Activated CD4-positive, alpha-beta T cell treated with anti-CD3 and anti-CD28 coated beads, Interleukin-2, amount 10 ng/mL, durations not matched to agents 24 days and 14 days (primary cell): ENCODE measurements at regions of chr7 and their contacts with region 1.

Region 1: GRCh38 chr7:130486114-130486958 is 5.5 kb upstream of the MEST start:
- DNase-seq: peak; percentile 83
- H3K4me3 Mint-ChIP-seq: peak overlapping the region; percentile 81
- H3K27ac Mint-ChIP-seq: peak overlapping the region; percentile 65
- H3K4me1 Mint-ChIP-seq: peaks cover 22% of the 10 kb centered on the region
- H3K27me3 Mint-ChIP-seq: peaks cover 67% of the 10 kb centered on the region

Region 2: DNA sequence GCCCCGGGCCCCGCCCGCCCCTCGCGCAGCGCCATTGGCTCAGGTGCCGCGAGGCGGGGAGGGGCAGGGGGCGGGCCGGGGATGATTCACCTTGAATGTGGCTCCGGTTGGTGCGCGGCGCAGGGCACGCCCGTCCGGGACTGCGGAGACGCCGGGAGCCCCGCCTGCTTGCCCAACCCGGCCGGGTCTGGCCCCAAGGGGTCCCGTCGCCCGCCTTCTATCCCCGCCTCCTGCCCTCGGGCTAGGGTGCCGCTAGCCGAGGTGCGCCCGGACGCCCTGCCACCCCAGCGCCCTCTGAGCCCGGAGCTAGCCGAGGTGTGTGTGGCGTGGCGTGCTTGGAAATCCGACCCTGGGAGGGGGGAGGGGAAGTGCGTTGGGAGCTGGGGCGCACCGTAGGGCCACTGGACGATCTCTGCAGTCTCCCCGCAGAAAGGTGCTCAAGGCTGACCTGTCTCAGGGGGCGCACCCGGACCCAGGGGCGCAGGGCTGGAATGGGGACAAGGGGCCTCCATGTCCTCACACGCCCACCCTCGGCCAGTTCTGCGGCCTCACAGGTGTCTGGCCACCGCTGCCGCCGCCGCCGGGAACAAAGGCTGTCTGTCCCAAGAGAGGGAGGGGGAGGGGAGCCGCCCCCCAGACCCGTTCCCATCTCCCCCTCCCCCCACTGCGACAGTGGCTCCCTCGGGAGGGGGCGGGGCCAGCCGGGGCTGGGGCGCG is 705.9 kb before region 1 on chr7:
- intact Hi-C with region 1: loop called (anchors 5 kb)
- DNase-seq: peak; percentile 87
- H3K4me3 Mint-ChIP-seq: peak overlapping the region; percentile 64
- H3K27ac Mint-ChIP-seq: no peak overlapping the region
- H3K4me1 Mint-ChIP-seq: peaks cover 28% of the 10 kb centered on the region
- H3K27me3 Mint-ChIP-seq: peaks cover 60% of the 10 kb centered on the region

Region 3: GRCh38 chr7:130242198-130243014 is 243.9 kb before region 1 on chr7:
- intact Hi-C with region 1: loop called (anchors 5 kb)
- DNase-seq: peak; percentile 84
- H3K4me3 Mint-ChIP-seq: no peak overlapping the region
- H3K27ac Mint-ChIP-seq: no peak overlapping the region
- H3K4me1 Mint-ChIP-seq: peaks cover 14% of the 10 kb centered on the region
- H3K27me3 Mint-ChIP-seq: peaks cover 4% of the 10 kb centered on the region

Region 4: GRCh38 chr7:130277763-130278643 is 208.3 kb before region 1 on chr7:
- intact Hi-C with region 1: loop called (anchors 10 kb)
- DNase-seq: no peak
- H3K4me3 Mint-ChIP-seq: peak overlapping the region; percentile 29
- H3K27ac Mint-ChIP-seq: peak overlapping the region; percentile 87
- H3K4me1 Mint-ChIP-seq: peaks cover 20% of the 10 kb centered on the region
- H3K27me3 Mint-ChIP-seq: no peaks in the 10 kb centered on the region

Region 5: DNA sequence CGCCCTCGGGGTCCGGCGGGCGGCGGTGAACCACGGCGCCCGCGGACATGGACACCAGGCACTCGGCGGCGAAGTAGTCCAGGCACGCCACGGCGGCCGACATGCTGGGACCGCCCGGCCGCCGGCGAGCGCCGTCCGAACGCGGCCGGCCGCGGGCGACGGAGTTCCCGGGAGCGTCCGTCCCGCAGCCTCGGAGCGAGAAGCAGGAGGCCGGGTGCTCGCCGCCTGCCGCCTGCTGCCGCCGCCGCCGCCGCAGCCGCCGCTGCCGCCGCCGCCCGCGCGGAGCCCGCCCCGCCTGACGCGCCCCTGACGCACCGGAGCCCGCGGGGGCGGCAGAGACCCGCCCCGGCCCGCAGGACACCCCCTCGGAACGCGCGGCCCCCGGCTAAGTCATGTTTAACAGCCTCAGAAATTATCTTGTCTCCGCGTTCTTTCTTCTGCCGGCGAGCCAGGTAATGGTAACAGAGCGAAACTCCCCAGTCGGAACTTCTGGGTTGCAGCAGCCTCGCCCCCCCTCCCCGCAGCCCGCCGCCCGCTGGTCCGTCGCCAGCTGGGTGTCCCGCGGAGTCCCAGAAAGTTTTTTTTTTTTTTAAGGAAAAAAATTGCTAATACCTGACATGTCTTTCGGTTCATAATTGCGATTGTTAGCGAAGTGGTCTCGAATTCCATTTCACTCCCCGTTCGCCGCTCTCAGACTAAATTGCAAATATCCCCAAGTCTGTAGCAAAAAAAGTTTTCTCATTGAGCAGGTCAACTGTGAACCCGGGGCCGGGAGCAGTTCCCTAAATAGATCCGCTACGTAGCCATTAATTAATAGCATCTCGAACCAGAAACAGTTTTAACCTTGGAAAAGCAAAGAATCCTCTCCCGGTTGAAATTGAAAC is 247.8 kb after region 1 on chr7 and contains the start of gene KLF14:
- intact Hi-C with region 1: loop called (anchors 5 kb)
- DNase-seq: peak; percentile 76
- H3K4me3 Mint-ChIP-seq: peak within 1 kb of the TSS; percentile 87
- H3K27ac Mint-ChIP-seq: peak within 1 kb of the TSS; percentile 11
- H3K4me1 Mint-ChIP-seq: peaks cover 3% of the 10 kb centered on the region
- H3K27me3 Mint-ChIP-seq: peaks cover 70% of the 10 kb centered on the region
- total RNA-seq, gene KLF14: not detected in 2 replicates

Region 6: GRCh38 chr7:130758429-130759056 is 272.2 kb after region 1 on chr7:
- intact Hi-C with region 1: loop called (anchors 2 kb)
- DNase-seq: no peak
- H3K4me3 Mint-ChIP-seq: no peak overlapping the region
- H3K27ac Mint-ChIP-seq: no peak overlapping the region
- H3K4me1 Mint-ChIP-seq: no peaks in the 10 kb centered on the region
- H3K27me3 Mint-ChIP-seq: peaks cover 17% of the 10 kb centered on the region